B cell (primary cell): ENCODE measurements at regions of chr15 and their contacts with region 1.

Region 1: DNA sequence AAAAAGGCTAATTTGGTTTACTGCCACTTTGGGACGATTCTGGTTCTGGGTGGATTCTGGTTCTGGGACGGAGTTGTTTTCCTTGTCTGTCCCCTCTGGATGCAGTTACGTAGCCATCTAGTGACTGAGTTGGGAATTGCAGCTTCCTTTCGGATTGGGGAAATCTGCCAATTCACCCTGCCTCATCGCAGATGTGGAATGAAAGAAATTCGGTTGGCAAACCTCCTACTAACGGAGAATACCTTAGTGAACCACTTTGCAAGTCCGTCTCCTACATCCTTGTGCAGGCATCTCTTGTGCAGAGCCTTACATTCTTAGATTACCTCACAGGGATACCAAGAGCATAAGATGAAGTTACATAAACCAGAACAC is 31.5 kb upstream of the AP4E1 start:
- DNase-seq: peak; percentile 82
- ATAC-seq: peak; percentile 82
- H3K4me3 ChIP-seq: peak overlapping the region in 4 of 5 experiments; percentile 19 to 52 (median 46)
- H3K4me3 Mint-ChIP-seq: peak overlapping the region; percentile 83
- H3K27ac ChIP-seq: no peak overlapping the region
- H3K27ac Mint-ChIP-seq: peak overlapping the region; percentile 21
- H3K4me1 ChIP-seq: peaks cover 3 to 22% of the 10 kb centered on the region in 2 donors
- H3K4me1 Mint-ChIP-seq: peaks cover 34% of the 10 kb centered on the region
- H3K27me3 ChIP-seq: no peaks in the 10 kb centered on the region
- H3K27me3 Mint-ChIP-seq: no peaks in the 10 kb centered on the region
- CTCF ChIP-seq: peak; percentile 99

Region 2: GRCh38 chr15:50675536-50676144 is 201.3 kb before region 1 on chr15:
- CTCF ChIA-PET with region 1: interaction called, 52 read pairs
- POLR2A ChIA-PET with region 1: no interaction called
- intact Hi-C with region 1: loop called (anchors 1 kb)
- DNase-seq: peak; percentile 54
- ATAC-seq: no peak
- H3K4me3 ChIP-seq: no peak overlapping the region
- H3K4me3 Mint-ChIP-seq: no peak overlapping the region
- H3K27ac ChIP-seq: no peak overlapping the region
- H3K27ac Mint-ChIP-seq: no peak overlapping the region
- H3K4me1 ChIP-seq: peaks cover 3 to 5% of the 10 kb centered on the region in 2 donors
- H3K4me1 Mint-ChIP-seq: peaks cover 24% of the 10 kb centered on the region
- H3K27me3 ChIP-seq: no peaks in the 10 kb centered on the region
- H3K27me3 Mint-ChIP-seq: no peaks in the 10 kb centered on the region
- CTCF ChIP-seq: peak; percentile 96

Region 3: GRCh38 chr15:50765195-50765973 is 111.6 kb before region 1 on chr15 and contains the start of gene SPPL2A:
- CTCF ChIA-PET with region 1: interaction called, 4 read pairs
- POLR2A ChIA-PET with region 1: interaction called, 3 read pairs
- intact Hi-C with region 1: loop called (anchors 2 kb)
- DNase-seq: peak; percentile 91
- ATAC-seq: peak; percentile 94
- H3K4me3 ChIP-seq: peak within 1 kb of the TSS; percentile 84 to 98 (median 93)
- H3K4me3 Mint-ChIP-seq: peak within 1 kb of the TSS; percentile 88
- H3K27ac ChIP-seq: peak within 1 kb of the TSS; percentile 91
- H3K27ac Mint-ChIP-seq: peak within 1 kb of the TSS; percentile 93
- H3K4me1 ChIP-seq: peaks cover 17 to 23% of the 10 kb centered on the region in 2 donors
- H3K4me1 Mint-ChIP-seq: peaks cover 39% of the 10 kb centered on the region
- H3K27me3 ChIP-seq: no peaks in the 10 kb centered on the region
- H3K27me3 Mint-ChIP-seq: no peaks in the 10 kb centered on the region
- CTCF ChIP-seq: no peak
- total RNA-seq, gene SPPL2A: 78.3 and 78.4 TPM in 2 replicates

Region 4: DNA sequence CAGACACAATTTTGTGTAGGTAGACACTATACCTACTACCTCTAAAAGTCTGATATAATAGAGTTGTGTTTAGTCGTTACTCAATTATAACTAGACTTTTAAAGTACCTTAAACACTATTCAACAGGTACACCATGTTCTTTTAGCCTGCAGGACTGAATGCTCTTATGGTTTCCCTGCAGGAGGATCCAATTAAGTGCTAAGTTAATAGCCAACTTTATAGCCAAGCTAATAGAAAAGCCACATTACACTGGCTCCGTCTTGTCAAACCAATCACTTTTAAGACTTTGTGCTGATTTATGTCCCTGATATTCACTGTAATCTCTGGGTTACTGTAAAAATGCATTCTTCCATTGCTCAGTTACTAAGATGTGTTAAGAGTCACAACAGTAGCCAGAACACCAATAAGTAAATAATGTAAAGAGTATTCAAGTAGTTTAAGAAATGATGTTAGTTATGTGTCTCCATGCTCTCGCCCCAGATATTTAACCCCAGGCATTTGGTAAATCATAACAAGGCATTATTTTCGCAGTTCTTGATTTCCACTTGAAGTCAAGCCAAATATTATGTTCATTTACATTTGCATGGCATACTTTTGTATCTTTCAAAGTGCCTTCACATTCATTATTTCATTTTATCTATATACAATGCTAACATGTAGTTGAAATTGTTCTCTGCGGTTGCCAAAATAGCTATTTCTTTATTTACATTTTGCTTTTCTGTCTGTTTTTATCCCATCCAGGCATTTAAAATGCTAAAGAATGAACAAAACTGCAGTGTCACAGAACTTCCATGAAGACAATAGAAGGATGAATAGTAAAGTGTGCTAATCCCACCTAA is 11.2 kb before region 1 on chr15:
- CTCF ChIA-PET with region 1: interaction called, 19 read pairs
- POLR2A ChIA-PET with region 1: no interaction called
- intact Hi-C with region 1: no loop called
- DNase-seq: no peak
- ATAC-seq: no peak
- H3K4me3 ChIP-seq: no peak overlapping the region
- H3K4me3 Mint-ChIP-seq: no peak overlapping the region
- H3K27ac ChIP-seq: no peak overlapping the region
- H3K27ac Mint-ChIP-seq: no peak overlapping the region
- H3K4me1 ChIP-seq: no peaks in the 10 kb centered on the region
- H3K4me1 Mint-ChIP-seq: no peaks in the 10 kb centered on the region
- H3K27me3 ChIP-seq: no peaks in the 10 kb centered on the region
- H3K27me3 Mint-ChIP-seq: no peaks in the 10 kb centered on the region
- CTCF ChIP-seq: no peak

Region 5: GRCh38 chr15:51260212-51260611 is 383.2 kb after region 1 on chr15:
- CTCF ChIA-PET with region 1: no interaction called
- POLR2A ChIA-PET with region 1: no interaction called
- intact Hi-C with region 1: no loop called
- DNase-seq: no peak
- ATAC-seq: no peak
- H3K4me3 ChIP-seq: no peak overlapping the region
- H3K4me3 Mint-ChIP-seq: no peak overlapping the region
- H3K27ac ChIP-seq: no peak overlapping the region
- H3K27ac Mint-ChIP-seq: no peak overlapping the region
- H3K4me1 ChIP-seq: no peaks in the 10 kb centered on the region
- H3K4me1 Mint-ChIP-seq: no peaks in the 10 kb centered on the region
- H3K27me3 ChIP-seq: peaks cover 0 to 18% (median 0%) of the 10 kb centered on the region in 4 experiments
- H3K27me3 Mint-ChIP-seq: peaks cover 17% of the 10 kb centered on the region
- CTCF ChIP-seq: no peak